Activated CD8-positive, alpha-beta memory T cell treated with anti-CD3 and anti-CD28 coated beads, Interleukin-2, amount 10 ng/mL, durations not matched to agents 7 days and 5 days (primary cell): ENCODE measurements at regions of chr6 and their contacts with region 1.

Region 1: GRCh38 chr6:37207903-37208456 is 38.0 kb downstream of the PIM1 start:
- DNase-seq: peak; percentile 97
- ATAC-seq: peak; percentile 85
- H3K4me3 Mint-ChIP-seq: peak overlapping the region; percentile 3
- H3K27ac Mint-ChIP-seq: peak overlapping the region; percentile 88
- H3K4me1 Mint-ChIP-seq: peaks cover 65% of the 10 kb centered on the region
- H3K27me3 Mint-ChIP-seq: no peaks in the 10 kb centered on the region

Region 2: GRCh38 chr6:37190159-37190535 is 17.8 kb before region 1 on chr6:
- CTCF ChIA-PET with region 1: interaction called, 314 read pairs
- DNase-seq: no peak
- ATAC-seq: peak; percentile 31
- H3K4me3 Mint-ChIP-seq: no peak overlapping the region
- H3K27ac Mint-ChIP-seq: peak overlapping the region; percentile 81
- H3K4me1 Mint-ChIP-seq: peaks cover 73% of the 10 kb centered on the region
- H3K27me3 Mint-ChIP-seq: no peaks in the 10 kb centered on the region

Region 3: GRCh38 chr6:37222125-37222967 is 14.4 kb after region 1 on chr6:
- CTCF ChIA-PET with region 1: interaction called, 12 read pairs
- DNase-seq: peak; percentile 89
- ATAC-seq: peak; percentile 95
- H3K4me3 Mint-ChIP-seq: peak overlapping the region; percentile 79
- H3K27ac Mint-ChIP-seq: peak overlapping the region; percentile 71
- H3K4me1 Mint-ChIP-seq: peaks cover 24% of the 10 kb centered on the region
- H3K27me3 Mint-ChIP-seq: no peaks in the 10 kb centered on the region

Region 4: GRCh38 chr6:37251211-37251780 is 43.3 kb after region 1 on chr6:
- CTCF ChIA-PET with region 1: no interaction called
- DNase-seq: no peak
- ATAC-seq: no peak
- H3K4me3 Mint-ChIP-seq: no peak overlapping the region
- H3K27ac Mint-ChIP-seq: no peak overlapping the region
- H3K4me1 Mint-ChIP-seq: no peaks in the 10 kb centered on the region
- H3K27me3 Mint-ChIP-seq: peaks cover 2% of the 10 kb centered on the region

Region 5: GRCh38 chr6:37314487-37315156 is 106.6 kb after region 1 on chr6:
- CTCF ChIA-PET with region 1: interaction called, 12 read pairs
- DNase-seq: peak; percentile 67
- ATAC-seq: peak; percentile 82
- H3K4me3 Mint-ChIP-seq: no peak overlapping the region
- H3K27ac Mint-ChIP-seq: peak overlapping the region; percentile 58
- H3K4me1 Mint-ChIP-seq: peaks cover 7% of the 10 kb centered on the region
- H3K27me3 Mint-ChIP-seq: no peaks in the 10 kb centered on the region